ENCODE measurements at regions of chr6 and their contacts with region 1.

Region 1: DNA sequence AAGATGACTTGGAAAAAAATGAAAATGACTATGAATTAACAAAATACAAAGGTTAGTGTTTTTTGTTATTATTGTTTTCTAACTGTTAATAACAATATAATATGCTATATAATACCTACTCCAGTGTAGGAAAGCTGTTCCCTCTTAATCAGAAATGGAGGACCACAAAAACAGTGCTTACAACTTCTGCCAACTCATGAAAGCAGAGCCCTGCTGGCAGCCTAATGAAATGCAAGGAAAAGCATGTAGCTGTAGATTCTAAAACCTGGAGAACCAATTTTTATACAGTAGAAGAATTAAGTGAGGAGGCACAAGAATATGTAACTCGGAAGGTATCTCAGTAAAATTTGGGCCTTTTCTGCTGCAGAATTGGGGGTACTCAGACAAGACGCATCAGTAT is 29.4 kb downstream of the PHIP start:
- DNase-seq: no peak
- ATAC-seq: no peak
- H3K4me3 ChIP-seq: no peak overlapping the region
- H3K27ac ChIP-seq: no peak overlapping the region
- H3K4me1 ChIP-seq: no peaks in the 10 kb centered on the region
- H3K27me3 ChIP-seq: no peaks in the 10 kb centered on the region
- CTCF ChIP-seq: peak in 6 of 9 donors; percentile 26 to 45 (median 30)

Region 2: GRCh38 chr6:78951471-78951870 is 97.1 kb before region 1 on chr6:
- intact Hi-C with region 1: loop called in 1 of 10 experiments (anchors 10 kb)
- DNase-seq: no peak
- ATAC-seq: no peak
- H3K4me3 ChIP-seq: no peak overlapping the region
- H3K27ac ChIP-seq: no peak overlapping the region
- H3K4me1 ChIP-seq: no peaks in the 10 kb centered on the region
- H3K27me3 ChIP-seq: no peaks in the 10 kb centered on the region
- CTCF ChIP-seq: no peak

Region 3: DNA sequence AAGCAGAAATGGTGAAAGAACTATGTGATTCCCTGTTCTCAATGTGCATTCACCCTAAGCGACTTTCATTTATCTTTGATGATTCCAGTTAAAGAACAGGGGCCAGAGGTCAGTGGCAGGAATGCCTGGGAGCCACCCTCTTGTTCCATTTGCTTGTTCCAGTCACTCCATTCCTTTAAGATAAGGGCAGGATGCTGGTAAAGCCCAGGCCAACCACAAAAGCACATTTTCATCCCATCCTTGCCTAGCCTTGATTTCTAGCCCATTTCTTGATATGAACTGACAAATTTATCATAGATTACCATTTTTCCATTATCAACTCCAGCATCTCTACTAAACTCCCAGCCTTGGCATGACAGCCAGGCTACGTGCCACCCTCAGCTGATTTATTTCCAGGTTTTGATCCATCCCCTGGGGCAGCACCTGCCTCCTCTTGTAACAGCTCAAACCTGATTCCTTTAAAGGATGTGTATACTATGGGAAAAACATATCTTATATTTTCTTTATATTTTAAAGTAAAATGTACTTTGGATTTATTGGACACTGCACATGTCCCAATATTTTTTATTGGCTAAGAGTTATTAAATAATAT is 166.7 kb after region 1 on chr6:
- intact Hi-C with region 1: no loop called
- DNase-seq: no peak
- ATAC-seq: peak in 3 of 8 donors; percentile 50 to 67 (median 53)
- H3K4me3 ChIP-seq: no peak overlapping the region
- H3K27ac ChIP-seq: no peak overlapping the region
- H3K4me1 ChIP-seq: peaks cover 0 to 41% (median 19%) of the 10 kb centered on the region in 9 donors
- H3K27me3 ChIP-seq: no peaks in the 10 kb centered on the region
- CTCF ChIP-seq: no peak

Measured in heart right ventricle (tissue), 16 donors.